Astrocyte of the cerebellum (primary cell): ENCODE measurements at regions of chr4 and their contacts with region 1.

Region 1: GRCh38 chr4:3426465-3427133 is 15.2 kb upstream of the HGFAC start:
- DNase-seq: no peak
- H3K4me3 ChIP-seq: no peak overlapping the region
- CTCF ChIP-seq: no peak

Region 2: GRCh38 chr4:3179126-3179706 is 247.4 kb before region 1 on chr4:
- in situ Hi-C with region 1: no loop called
- DNase-seq: no peak
- H3K4me3 ChIP-seq: no peak overlapping the region
- CTCF ChIP-seq: no peak

Region 3: DNA sequence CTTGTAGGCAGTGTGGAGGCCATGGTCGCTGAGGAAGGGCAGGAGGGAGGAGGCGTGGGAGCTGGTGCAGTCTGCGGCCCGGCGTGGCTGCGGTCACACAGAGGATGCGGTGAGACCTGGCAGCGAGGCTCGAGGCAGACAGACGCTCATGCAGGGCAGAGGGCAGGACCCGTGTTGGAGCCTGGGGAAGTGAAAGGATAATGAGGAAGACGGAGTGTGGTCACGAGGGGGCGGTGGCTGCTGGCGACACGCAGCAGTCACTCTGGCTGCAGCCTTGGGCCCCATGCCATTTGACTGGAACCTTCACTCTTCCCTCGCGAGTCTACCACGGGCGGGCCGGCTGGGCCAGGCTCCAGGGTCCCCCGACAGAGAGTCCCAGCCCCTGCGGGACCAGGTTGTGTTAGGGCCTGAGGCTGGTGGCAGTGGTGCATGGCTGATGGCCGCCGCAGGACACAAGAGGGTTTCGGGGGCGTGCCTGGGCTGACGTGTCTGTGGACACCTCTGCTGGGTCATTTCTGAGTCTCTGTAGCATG is 53.6 kb before region 1 on chr4:
- in situ Hi-C with region 1: no loop called
- DNase-seq: no peak
- H3K4me3 ChIP-seq: no peak overlapping the region
- CTCF ChIP-seq: no peak

Region 4: GRCh38 chr4:3458371-3458770 is 31.8 kb after region 1 on chr4:
- in situ Hi-C with region 1: no loop called
- DNase-seq: no peak
- H3K4me3 ChIP-seq: no peak overlapping the region
- CTCF ChIP-seq: no peak

Region 5: DNA sequence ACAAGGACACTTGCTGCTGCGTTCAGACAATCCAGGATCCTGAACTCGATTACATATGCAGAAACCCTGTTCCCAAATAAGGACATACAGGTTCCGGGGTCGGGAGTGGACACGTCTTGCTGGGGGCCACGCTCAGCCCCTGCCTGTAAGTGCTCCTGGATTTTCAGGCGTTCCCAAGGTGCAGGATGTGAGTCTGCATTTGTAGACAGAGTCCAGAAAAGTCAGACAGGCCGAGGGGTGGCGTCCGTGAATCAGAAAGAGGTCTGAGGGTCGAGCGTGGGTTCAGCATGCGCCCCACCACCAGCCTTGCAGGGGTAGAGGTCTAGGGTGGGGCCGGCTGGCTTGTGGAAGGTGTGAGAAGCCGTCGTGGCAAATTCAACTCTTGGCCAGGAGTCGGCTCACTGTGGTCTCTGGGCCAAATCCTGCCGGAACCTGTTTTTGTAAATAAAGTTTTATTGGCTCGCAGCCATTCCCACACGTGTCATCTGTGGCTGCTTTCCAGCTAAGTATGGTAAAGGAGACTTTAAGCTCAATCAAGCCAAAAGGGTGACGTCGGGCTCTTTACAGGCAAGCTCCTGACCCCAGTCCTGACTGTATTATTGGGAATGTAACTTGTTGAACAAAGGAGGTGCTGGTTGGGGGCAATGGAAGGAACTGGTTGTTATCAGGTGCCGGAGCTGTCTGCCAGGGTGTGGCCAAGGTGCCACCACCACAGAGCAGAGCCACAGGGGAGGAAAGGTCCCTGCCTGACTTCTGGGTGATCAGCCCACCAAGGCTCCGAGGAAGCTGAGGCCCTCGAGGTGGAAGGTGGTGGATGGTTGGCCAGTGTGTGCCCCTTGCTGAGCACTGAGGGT is 43.9 kb after region 1 on chr4:
- in situ Hi-C with region 1: loop called (anchors 5 kb)
- DNase-seq: no peak
- H3K4me3 ChIP-seq: no peak overlapping the region
- CTCF ChIP-seq: no peak